GM12878 (cell line): ENCODE measurements at regions of chr18 and their contacts with region 1.

Region 1: DNA sequence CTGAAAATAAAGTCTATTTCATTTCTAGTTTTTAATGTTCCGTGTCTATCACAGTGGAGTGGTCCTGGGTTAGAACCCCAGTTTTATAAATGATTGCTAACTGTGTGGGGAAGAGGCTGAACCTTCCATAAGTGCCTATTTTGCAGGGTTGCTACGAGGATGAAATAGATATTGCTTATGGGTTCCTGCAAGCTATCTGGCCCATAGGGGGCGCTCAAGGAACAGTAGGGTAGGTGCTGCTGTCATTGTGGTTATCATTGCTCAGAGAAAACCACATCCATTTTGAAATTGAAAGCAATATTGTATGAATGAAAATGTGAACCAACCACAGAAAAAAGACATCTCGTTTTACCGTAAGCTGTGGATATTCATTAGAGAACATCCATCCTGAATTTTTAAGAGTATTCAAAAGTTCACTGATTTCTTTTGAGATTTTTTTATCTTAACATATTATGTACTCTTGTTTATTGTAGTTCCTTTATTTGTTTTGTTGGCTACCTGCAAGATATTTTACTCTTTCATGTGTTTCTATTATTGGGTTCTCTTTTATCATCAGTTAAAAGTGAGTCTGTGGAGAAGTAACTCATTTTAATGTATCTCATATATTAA is 261.6 kb downstream of the NAPG start:
- DNase-seq: peak; percentile 77
- ATAC-seq: peak; percentile 96
- H3K4me3 ChIP-seq: no peak overlapping the region
- H3K27ac ChIP-seq: no peak overlapping the region
- H3K4me1 ChIP-seq: no peaks in the 10 kb centered on the region; the same call in 1 of the 2 replicates
- H3K27me3 ChIP-seq: no peaks in the 10 kb centered on the region
- CTCF ChIP-seq: peak; percentile 79 to 97 (median 82)
- EP300 ChIP-seq: peak; percentile 48 to 55; a peak in 2 of 4 replicates
- POLR2A ChIP-seq: no peak
- RAD21 ChIP-seq: peak; percentile 88

Region 2: DNA sequence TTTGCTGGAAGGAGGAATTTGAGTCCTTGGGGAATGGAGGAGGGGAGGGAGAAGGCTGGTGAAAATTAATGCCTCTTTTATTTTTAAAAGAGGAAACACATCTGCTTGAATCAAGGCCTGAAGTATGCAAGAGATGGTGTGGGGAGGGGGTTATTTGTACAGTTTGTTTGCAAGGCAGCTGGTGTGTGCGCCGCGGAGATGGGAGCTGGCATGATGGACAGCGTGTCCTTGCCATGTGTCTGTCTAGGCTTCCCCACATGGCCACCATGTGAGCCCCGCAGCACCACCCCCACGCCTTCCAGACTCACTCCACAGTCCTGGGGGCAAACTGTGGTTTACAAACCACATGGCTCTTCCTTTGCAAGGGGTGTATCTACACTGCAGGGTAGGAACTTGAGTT is 487.8 kb before region 1 on chr18:
- CTCF ChIA-PET with region 1: no interaction called
- POLR2A ChIA-PET with region 1: no interaction called
- RAD21 ChIA-PET with region 1: no interaction called
- SMC1A ChIA-PET with region 1: no interaction called
- in situ Hi-C with region 1: no loop called
- intact Hi-C with region 1: no loop called
- DNase-seq: no peak
- ATAC-seq: no peak
- H3K4me3 ChIP-seq: no peak overlapping the region
- H3K27ac ChIP-seq: no peak overlapping the region
- H3K4me1 ChIP-seq: no peaks in the 10 kb centered on the region
- H3K27me3 ChIP-seq: no peaks in the 10 kb centered on the region
- CTCF ChIP-seq: no peak
- EP300 ChIP-seq: no peak
- POLR2A ChIP-seq: no peak
- RAD21 ChIP-seq: no peak

Region 3: DNA sequence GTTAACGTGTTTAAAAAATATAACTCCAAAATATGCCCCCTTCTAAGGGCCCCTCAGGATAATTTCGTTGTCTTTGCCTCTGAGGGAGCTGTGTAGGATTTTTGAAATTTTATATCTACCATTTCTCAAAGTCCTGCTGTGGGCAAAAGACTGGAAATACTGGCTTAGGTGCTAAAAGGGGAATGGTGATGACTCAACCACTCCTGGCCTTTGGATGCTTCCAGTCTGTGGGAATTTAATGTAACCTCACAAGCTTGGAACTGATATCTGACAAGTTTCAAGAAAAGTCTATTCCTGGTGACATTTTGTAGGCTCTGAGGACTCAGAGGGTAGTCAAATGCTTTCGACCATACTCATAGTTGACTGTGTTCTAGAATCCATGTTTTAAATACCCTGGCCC is 336.4 kb before region 1 on chr18:
- CTCF ChIA-PET with region 1: no interaction called
- POLR2A ChIA-PET with region 1: interaction called, 10 read pairs
- RAD21 ChIA-PET with region 1: no interaction called
- SMC1A ChIA-PET with region 1: no interaction called
- in situ Hi-C with region 1: no loop called
- intact Hi-C with region 1: no loop called
- DNase-seq: no peak
- ATAC-seq: no peak
- H3K4me3 ChIP-seq: no peak overlapping the region
- H3K27ac ChIP-seq: no peak overlapping the region
- H3K4me1 ChIP-seq: no peaks in the 10 kb centered on the region
- H3K27me3 ChIP-seq: peaks cover 10 to 16% of the 10 kb centered on the region in 2 experiments
- CTCF ChIP-seq: no peak
- EP300 ChIP-seq: no peak
- POLR2A ChIP-seq: no peak
- RAD21 ChIP-seq: no peak

Region 4: DNA sequence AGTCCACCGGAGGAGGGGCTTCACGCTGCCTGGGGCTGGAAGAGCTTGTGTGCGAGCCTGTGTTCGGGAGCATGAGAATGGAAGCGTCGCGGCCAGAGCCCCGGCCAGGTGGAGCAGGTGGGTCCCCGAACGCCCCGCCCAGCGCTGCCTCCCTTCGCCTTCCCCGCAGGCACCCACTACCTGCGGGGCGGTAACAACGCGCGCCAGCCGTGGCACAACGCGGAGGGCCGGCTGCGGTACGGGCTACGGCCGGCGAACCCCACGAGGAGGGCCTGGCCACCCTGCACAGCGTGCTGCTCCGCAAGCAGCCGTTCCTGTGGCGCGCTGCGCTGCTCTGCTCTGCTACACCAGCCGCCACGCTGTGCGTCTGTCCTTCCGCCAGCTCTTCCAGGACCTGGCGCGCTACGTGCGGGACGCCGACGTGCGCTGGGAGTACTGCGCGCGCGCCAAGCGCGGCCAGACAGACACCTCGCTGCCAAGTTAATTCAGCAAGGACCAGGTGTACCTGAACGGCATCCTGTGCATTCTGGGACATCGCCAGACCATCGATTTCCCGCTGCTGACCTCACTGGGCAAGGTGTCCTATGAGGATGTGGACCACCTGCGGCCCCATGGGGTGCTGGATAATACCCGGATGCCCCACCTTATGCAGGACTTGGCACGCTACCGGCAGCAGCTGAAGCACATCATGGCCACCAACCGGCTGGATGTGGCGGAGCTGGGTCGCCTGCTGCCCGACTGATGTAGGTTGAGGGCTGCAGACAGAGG is 61.0 kb before region 1 on chr18:
- CTCF ChIA-PET with region 1: no interaction called
- POLR2A ChIA-PET with region 1: no interaction called
- RAD21 ChIA-PET with region 1: no interaction called
- SMC1A ChIA-PET with region 1: no interaction called
- in situ Hi-C with region 1: no loop called
- intact Hi-C with region 1: no loop called
- DNase-seq: no peak
- ATAC-seq: no peak
- H3K4me3 ChIP-seq: no peak overlapping the region
- H3K27ac ChIP-seq: no peak overlapping the region
- H3K4me1 ChIP-seq: no peaks in the 10 kb centered on the region
- H3K27me3 ChIP-seq: no peaks in the 10 kb centered on the region
- CTCF ChIP-seq: no peak
- EP300 ChIP-seq: no peak
- POLR2A ChIP-seq: peak; percentile 44; the same call in 1 of the 2 replicates
- RAD21 ChIP-seq: no peak

Region 5: GRCh38 chr18:10760986-10761385 is 26.4 kb before region 1 on chr18:
- CTCF ChIA-PET with region 1: no interaction called
- POLR2A ChIA-PET with region 1: no interaction called
- RAD21 ChIA-PET with region 1: no interaction called
- SMC1A ChIA-PET with region 1: no interaction called
- in situ Hi-C with region 1: no loop called
- intact Hi-C with region 1: no loop called
- DNase-seq: no peak
- ATAC-seq: no peak
- H3K4me3 ChIP-seq: no peak overlapping the region
- H3K27ac ChIP-seq: no peak overlapping the region
- H3K4me1 ChIP-seq: no peaks in the 10 kb centered on the region
- H3K27me3 ChIP-seq: no peaks in the 10 kb centered on the region
- CTCF ChIP-seq: no peak
- EP300 ChIP-seq: no peak
- POLR2A ChIP-seq: no peak
- RAD21 ChIP-seq: no peak

Region 6: DNA sequence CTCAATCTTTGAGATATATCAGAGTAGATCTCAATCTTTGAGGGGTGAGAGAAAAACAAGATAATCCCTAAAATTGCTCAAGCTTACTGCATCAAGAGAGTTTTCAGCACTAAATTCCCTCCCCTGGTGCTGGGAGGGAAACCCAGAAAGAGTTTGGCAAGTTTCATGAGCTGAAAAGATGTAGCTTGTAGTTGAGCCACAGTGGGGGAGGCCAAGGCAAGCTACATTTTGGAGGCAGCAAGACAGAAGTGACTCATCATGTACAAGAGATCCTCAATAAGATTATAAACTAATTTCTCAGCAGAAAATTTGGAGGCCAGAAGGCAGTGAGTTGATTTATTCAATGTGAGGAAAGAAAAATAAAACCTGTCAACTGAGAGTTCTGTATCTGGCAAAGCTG is 53.8 kb after region 1 on chr18:
- CTCF ChIA-PET with region 1: interaction called, 13 read pairs
- POLR2A ChIA-PET with region 1: interaction called, 3 read pairs
- RAD21 ChIA-PET with region 1: interaction called, 5 read pairs
- SMC1A ChIA-PET with region 1: interaction called, 9 read pairs
- in situ Hi-C with region 1: no loop called
- intact Hi-C with region 1: no loop called
- DNase-seq: no peak
- ATAC-seq: no peak
- H3K4me3 ChIP-seq: no peak overlapping the region
- H3K27ac ChIP-seq: peak overlapping the region; percentile 13; the same call in 1 of the 2 replicates
- H3K4me1 ChIP-seq: peaks cover 15% of the 10 kb centered on the region
- H3K27me3 ChIP-seq: no peaks in the 10 kb centered on the region
- CTCF ChIP-seq: no peak
- EP300 ChIP-seq: no peak
- POLR2A ChIP-seq: no peak
- RAD21 ChIP-seq: no peak

Region 7: DNA sequence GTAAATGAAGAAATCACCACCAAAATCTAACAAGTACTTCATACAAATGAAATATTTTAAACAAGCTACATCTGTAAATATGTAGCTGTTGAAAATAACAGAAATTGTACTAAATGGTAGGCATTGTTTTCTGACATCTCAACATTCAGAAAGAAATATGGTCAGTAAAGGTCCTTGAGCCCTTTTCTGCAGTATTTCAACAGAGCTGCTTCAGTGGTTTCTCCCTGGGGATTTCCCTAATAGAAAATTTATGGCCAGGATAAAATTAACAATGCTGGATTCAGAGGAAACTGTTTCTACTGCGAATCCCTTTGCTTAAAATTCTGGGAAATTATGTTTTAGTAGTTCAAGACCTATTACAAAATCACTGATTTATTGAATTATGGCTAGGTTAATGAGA is 105.4 kb after region 1 on chr18:
- CTCF ChIA-PET with region 1: interaction called, 11 read pairs
- POLR2A ChIA-PET with region 1: no interaction called
- RAD21 ChIA-PET with region 1: no interaction called
- SMC1A ChIA-PET with region 1: interaction called, 8 read pairs
- in situ Hi-C with region 1: no loop called
- intact Hi-C with region 1: no loop called
- DNase-seq: no peak
- ATAC-seq: peak; percentile 29; the same call in 1 of the 3 replicates
- H3K4me3 ChIP-seq: no peak overlapping the region
- H3K27ac ChIP-seq: no peak overlapping the region
- H3K4me1 ChIP-seq: peaks cover 13% of the 10 kb centered on the region
- H3K27me3 ChIP-seq: no peaks in the 10 kb centered on the region
- CTCF ChIP-seq: no peak
- EP300 ChIP-seq: no peak
- POLR2A ChIP-seq: no peak
- RAD21 ChIP-seq: no peak

Region 8: DNA sequence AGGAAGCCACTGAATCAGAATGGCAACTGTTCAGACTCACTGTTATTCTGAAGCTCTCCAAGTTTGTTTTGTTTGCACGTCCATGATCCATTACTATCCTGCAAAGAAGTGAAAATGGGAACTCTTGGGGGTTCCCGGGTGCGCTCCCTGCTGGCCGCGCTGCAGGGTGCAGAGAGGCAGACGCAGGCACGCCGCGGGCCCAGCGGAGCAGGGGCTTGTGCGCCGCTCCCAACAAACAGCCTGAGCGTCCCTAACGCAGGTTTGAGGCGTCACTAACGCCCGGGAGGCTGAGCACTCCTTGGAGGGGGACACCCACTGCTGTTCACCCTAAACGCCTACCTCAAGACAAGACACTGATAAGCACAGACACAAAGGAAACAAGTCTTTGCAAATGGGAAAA is 376.3 kb after region 1 on chr18:
- CTCF ChIA-PET with region 1: interaction called, 33 read pairs
- POLR2A ChIA-PET with region 1: no interaction called
- RAD21 ChIA-PET with region 1: interaction called, 17 read pairs
- SMC1A ChIA-PET with region 1: interaction called, 11 read pairs
- in situ Hi-C with region 1: loop called (anchors 5 kb)
- intact Hi-C with region 1: no loop called
- DNase-seq: no peak
- ATAC-seq: peak; percentile 94
- H3K4me3 ChIP-seq: no peak overlapping the region
- H3K27ac ChIP-seq: no peak overlapping the region
- H3K4me1 ChIP-seq: peaks cover 9% of the 10 kb centered on the region
- H3K27me3 ChIP-seq: no peaks in the 10 kb centered on the region
- CTCF ChIP-seq: peak; percentile 61 to 88 (median 62)
- EP300 ChIP-seq: no peak
- POLR2A ChIP-seq: no peak
- RAD21 ChIP-seq: peak; percentile 25; the same call in 1 of the 2 replicates